AG04449 (cell line): ENCODE measurements at regions of chr2 and their contacts with region 1.

Region 1: GRCh38 chr2:42859006-42859552 is 66.7 kb upstream of the HAAO start:
- DNase-seq: peak; percentile 24
- H3K4me3 ChIP-seq: no peak overlapping the region
- CTCF ChIP-seq: peak; percentile 72

Region 2: DNA sequence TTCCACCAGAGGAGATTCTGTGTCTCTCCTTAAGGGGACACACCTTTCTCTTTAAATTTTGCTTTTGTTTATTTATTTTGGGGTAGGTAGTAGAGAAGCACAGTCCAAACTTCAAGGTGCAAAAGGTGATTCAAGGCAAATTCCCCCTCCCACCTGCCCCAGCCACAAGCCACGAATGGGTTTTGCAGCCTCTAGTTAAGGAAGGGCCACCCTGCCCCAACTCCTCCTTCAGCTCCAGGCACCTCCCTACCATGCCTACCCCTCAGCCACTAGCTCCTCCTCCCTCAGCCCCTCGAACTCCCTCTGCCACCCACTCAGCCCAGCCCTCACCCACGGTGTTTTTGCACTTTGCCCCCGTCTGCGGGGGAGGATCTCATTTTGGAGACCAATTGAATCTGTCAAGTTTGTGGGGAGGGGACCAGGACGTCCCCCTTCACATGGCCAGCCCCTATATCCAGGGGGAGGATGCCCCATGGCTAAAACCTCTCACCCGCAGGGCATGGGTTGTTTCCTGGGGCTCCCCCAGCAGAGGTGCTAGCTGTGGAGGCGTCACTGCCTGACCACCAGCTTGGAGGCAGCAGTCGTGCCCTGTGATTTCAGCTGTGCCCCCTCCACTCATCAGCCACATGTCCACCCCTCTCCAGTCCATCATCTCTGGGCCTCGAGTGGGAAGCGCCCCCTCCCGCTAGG is 71.1 kb before region 1 on chr2:
- CTCF ChIA-PET with region 1: no interaction called
- POLR2A ChIA-PET with region 1: no interaction called
- DNase-seq: no peak
- H3K4me3 ChIP-seq: no peak overlapping the region
- CTCF ChIP-seq: no peak

Region 3: GRCh38 chr2:42848265-42848664 is 10.8 kb before region 1 on chr2:
- CTCF ChIA-PET with region 1: interaction called, 46 read pairs
- POLR2A ChIA-PET with region 1: no interaction called
- DNase-seq: no peak
- H3K4me3 ChIP-seq: no peak overlapping the region
- CTCF ChIP-seq: no peak

Region 4: GRCh38 chr2:42928692-42929545 is 69.8 kb after region 1 on chr2:
- CTCF ChIA-PET with region 1: interaction called, 67 read pairs
- POLR2A ChIA-PET with region 1: no interaction called
- DNase-seq: no peak
- H3K4me3 ChIP-seq: no peak overlapping the region
- CTCF ChIP-seq: peak; percentile 64

Region 5: GRCh38 chr2:42944779-42945415 is 85.8 kb after region 1 on chr2:
- CTCF ChIA-PET with region 1: interaction called, 95 read pairs
- POLR2A ChIA-PET with region 1: no interaction called
- DNase-seq: no peak
- H3K4me3 ChIP-seq: no peak overlapping the region
- CTCF ChIP-seq: no peak

Region 6: DNA sequence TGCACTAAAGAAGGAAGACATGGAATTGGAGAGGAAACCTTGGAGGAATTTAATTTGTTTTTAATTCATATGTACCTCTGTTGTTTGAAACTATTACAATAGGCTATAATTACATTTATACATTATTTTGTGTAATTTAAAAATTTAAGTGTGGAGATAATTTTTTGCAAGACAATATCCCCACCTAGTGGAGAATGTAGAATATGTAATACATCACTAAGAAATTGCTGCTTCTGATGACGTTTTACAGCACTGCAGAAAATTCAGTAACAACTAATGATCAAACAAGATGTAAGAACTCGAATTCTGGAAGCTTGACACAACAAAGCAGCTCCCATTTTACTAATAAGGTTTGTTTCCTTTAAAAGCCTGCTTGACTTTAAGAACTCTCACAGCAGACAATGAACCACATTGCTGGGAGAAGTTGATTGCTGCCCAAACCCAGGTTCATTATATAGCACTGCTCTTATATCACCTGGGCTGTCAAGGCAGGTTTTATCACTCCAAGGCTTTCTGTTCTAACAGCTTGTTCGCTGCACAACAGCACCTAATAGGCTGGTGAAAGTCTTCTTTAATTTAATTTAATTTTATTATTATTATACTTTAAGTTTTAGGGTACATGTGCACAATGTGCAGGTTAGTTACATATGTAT is 683.3 kb after region 1 on chr2:
- CTCF ChIA-PET with region 1: interaction called, 24 read pairs
- POLR2A ChIA-PET with region 1: no interaction called
- DNase-seq: no peak
- H3K4me3 ChIP-seq: no peak overlapping the region
- CTCF ChIP-seq: peak; percentile 12